ENCODE measurements at regions of chrX and their contacts with region 1.

Region 1: DNA sequence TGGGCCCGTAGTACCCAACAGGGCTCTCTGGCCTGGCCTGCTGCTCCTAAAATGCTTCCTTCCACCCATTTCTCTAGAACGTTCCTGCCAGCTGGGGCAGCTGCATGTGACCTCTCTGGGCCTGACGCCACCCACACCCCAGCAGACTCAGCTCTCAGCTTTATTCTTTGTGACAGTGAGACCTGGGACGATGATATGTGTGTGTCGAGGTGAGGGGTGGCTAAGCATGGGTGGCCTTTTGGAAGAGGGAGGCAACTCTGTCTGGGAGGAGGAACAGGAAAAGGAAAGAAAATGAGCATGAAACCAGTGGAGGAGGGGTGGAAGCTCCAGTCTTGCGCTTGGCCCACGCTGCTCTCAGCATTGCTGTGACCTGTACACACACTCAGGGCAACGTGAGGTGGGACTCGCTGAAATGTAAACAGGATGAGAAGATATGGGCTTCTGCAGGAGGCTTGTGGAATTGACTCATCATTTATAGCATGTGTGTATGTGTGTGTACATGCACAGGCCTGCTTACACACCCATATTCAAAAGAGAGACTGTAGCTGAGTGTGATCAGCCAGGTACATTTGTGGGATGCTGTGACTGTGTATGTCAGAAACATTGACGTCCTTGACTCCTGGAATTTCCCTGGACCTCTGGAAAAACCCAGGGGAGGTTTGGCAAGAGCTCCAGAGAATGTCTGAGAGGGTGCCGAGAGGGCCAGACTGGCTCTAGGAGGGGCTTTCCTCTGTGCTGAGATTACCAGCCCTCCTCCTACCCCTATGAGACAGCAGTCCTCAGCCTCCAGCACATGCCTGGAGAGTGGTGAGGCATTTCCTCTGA is 137.9 kb downstream of the PJA1 start:
- DNase-seq: peak; percentile 57
- H3K4me3 ChIP-seq: no peak overlapping the region
- H3K27ac ChIP-seq: peak overlapping the region in 1 of 4 donors; percentile 10
- H3K4me1 ChIP-seq: peaks cover 15 to 31% (median 26%) of the 10 kb centered on the region in 4 donors
- H3K27me3 ChIP-seq: no peaks in the 10 kb centered on the region
- CTCF ChIP-seq: no peak
- EP300 ChIP-seq: no peak
- POLR2A ChIP-seq: no peak

Region 2: DNA sequence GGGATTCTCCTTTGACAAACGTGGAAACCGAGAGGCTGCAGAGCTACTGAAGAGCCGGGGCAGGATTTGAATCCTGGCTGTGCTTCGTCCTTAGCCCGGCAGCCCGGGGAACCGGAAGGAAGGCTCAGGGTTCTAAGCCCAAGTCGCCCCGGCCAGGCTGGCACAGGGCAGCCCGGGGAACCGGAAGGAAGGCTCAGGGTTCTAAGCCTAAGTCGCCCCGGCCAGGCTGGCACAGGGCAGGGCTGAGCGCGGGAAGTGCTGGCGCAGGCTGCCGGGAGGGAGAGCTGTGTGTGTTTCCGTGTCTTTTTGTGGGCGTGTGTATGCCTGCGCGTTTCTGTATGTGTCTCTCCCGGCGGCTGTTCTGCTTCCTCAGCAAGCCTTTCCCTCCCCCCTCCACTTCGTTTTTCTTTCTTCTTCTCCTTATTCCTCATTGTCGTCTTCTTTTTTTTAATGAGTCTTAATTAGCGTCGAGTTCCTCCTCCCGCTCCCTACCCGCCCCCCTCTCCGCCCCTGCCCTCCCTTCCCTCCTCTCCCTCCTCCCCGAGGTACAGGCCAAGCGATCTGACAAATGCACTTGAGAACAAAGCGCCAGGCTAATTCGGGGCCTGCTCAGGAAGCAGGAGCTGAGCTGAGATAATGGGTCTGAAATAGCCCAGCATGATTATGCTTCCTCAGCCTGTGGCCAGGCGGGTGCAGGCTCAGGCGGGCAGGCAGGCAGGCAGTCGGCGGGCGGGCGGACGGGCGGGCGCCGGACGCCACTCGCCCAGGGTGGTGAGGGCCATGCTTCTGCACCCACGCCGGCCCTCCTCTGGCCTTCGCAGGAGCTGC is 132.7 kb before region 1 on chrX:
- intact Hi-C with region 1: loop called (anchors 10 kb)
- DNase-seq: no peak
- H3K4me3 ChIP-seq: peak overlapping the region; percentile 31 to 39 (median 34)
- H3K27ac ChIP-seq: peak overlapping the region; percentile 76 to 89 (median 84)
- H3K4me1 ChIP-seq: peaks cover 38 to 46% (median 43%) of the 10 kb centered on the region in 4 donors
- H3K27me3 ChIP-seq: no peaks in the 10 kb centered on the region
- CTCF ChIP-seq: no peak
- EP300 ChIP-seq: no peak
- POLR2A ChIP-seq: no peak

Region 3: DNA sequence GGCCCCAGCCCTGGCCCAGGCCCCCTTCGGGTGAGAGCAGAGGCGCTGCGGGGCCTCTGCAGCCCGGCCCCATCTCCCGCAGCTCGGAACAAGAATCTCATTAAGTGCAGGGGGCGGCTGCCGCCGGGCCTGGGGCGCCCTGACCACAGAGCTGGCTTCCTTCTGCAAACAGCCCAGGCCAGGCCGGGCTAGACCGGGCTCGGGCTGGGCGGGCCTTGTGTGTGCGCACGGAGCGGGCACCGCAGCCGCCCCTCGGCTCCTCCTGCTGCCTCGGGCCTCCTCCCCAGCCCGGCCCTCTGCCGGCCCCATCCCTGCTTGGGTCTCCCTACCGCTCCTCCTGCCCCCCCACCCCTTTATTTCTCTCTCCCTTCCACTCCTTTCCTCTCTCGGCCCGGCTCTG is 115.3 kb before region 1 on chrX:
- intact Hi-C with region 1: no loop called
- DNase-seq: no peak
- H3K4me3 ChIP-seq: no peak overlapping the region
- H3K27ac ChIP-seq: peak overlapping the region in 1 of 4 donors; percentile 22
- H3K4me1 ChIP-seq: peaks cover 0 to 12% (median 8%) of the 10 kb centered on the region in 4 donors
- H3K27me3 ChIP-seq: no peaks in the 10 kb centered on the region
- CTCF ChIP-seq: no peak
- EP300 ChIP-seq: no peak
- POLR2A ChIP-seq: no peak